ENCODE measurements at regions of chr12 and their contacts with region 1.

Region 1: GRCh38 chr12:4648501-4649357 is at the starts of genes AKAP3 and NDUFA9:
- DNase-seq: peak; percentile 53 to 87 (median 84)
- ATAC-seq: peak; percentile 97
- H3K4me3 ChIP-seq: peak within 1 kb of the TSS; percentile 92
- H3K4me3 Mint-ChIP-seq: peak within 1 kb of the TSS; percentile 88 to 99 (median 97)
- H3K27ac ChIP-seq: peak within 1 kb of the TSS; percentile 80
- H3K27ac Mint-ChIP-seq: peak within 1 kb of the TSS; percentile 90 to 99 (median 95)
- H3K4me1 ChIP-seq: peaks cover 14 to 15% of the 10 kb centered on the region in 2 donors
- H3K4me1 Mint-ChIP-seq: peaks cover 24 to 58% (median 46%) of the 10 kb centered on the region in 7 donors
- H3K27me3 ChIP-seq: no peaks in the 10 kb centered on the region
- H3K27me3 Mint-ChIP-seq: peaks cover 0 to 13% (median 0%) of the 10 kb centered on the region in 5 donors
- total RNA-seq, gene AKAP3: 1.2 to 6.9 (median 2.5) TPM
- total RNA-seq, gene NDUFA9: 55.5 to 103 (median 58.2) TPM

Region 2: DNA sequence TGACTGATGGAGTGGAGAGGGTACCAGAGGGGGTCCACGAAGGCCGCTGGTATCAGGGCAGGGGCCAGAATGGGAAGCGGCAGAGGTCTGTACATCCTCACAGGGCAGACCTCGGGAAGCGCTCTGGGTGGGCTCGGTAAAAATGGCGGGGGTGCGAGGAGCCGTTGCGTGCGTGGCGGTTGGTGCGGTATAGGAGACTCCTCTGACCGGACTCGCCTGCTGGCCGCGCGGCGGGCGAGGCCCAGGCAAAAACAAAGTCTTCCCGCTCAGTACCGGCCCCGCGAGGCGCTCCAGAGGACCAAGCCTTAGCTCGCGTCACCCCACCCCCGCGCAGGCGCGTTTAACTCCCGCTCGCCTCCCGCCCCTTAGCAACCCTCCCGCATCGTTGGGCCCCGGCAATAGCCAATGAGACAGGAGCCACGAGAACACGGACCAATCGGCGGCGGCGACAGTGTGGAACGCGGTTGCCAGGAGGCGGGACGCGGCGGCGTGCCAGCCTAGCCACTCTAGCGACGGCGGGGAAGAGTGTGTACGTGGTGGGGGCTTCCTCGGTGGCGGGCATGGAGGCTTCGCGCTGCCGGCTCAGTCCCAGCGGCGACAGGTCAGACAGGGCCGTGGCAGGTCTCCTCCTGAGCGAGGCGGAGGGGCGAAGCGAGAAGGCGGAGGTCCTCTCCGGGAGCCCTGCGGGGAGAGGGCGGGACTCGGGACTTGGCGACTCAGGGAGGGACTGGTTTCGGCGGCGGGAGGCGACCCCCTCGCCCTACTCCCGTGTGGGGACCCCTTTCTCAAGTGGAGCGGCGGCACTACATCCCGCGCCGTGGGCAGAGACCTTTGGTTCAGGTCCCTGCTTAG is 1758.1 kb before region 1 on chr12 and contains the start of gene TULP3:
- CTCF ChIA-PET with region 1: no interaction called
- POLR2A ChIA-PET with region 1: no interaction called
- intact Hi-C with region 1: loop called in 1 of 2 experiments (anchors 5 kb)
- DNase-seq: peak; percentile 95 to 98 (median 97)
- ATAC-seq: peak; percentile 99
- H3K4me3 ChIP-seq: peak within 1 kb of the TSS; percentile 96
- H3K4me3 Mint-ChIP-seq: peak within 1 kb of the TSS; percentile 93 to 100 (median 98)
- H3K27ac ChIP-seq: peak within 1 kb of the TSS; percentile 89
- H3K27ac Mint-ChIP-seq: peak within 1 kb of the TSS; percentile 81 to 97 (median 97)
- H3K4me1 ChIP-seq: peaks cover 3 to 8% of the 10 kb centered on the region in 2 donors
- H3K4me1 Mint-ChIP-seq: peaks cover 15 to 35% (median 31%) of the 10 kb centered on the region in 7 donors
- H3K27me3 ChIP-seq: no peaks in the 10 kb centered on the region
- H3K27me3 Mint-ChIP-seq: peaks cover 0 to 2% (median 0%) of the 10 kb centered on the region in 5 donors
- total RNA-seq, gene TULP3: 4.7 to 9.6 (median 7.4) TPM

Region 3: GRCh38 chr12:4353785-4354208 is 294.9 kb before region 1 on chr12:
- CTCF ChIA-PET with region 1: no interaction called
- POLR2A ChIA-PET with region 1: no interaction called
- intact Hi-C with region 1: loop called in 1 of 2 experiments (anchors 5 kb)
- DNase-seq: peak in 7 of 9 donors; percentile 32 to 64 (median 53)
- ATAC-seq: peak; percentile 90
- H3K4me3 ChIP-seq: no peak overlapping the region
- H3K4me3 Mint-ChIP-seq: no peak overlapping the region
- H3K27ac ChIP-seq: no peak overlapping the region
- H3K27ac Mint-ChIP-seq: peak overlapping the region in 7 of 9 donors; percentile 14 to 71 (median 51)
- H3K4me1 ChIP-seq: no peaks in the 10 kb centered on the region
- H3K4me1 Mint-ChIP-seq: peaks cover 0 to 9% (median 4%) of the 10 kb centered on the region in 7 donors
- H3K27me3 ChIP-seq: no peaks in the 10 kb centered on the region
- H3K27me3 Mint-ChIP-seq: peaks cover 0 to 2% (median 0%) of the 10 kb centered on the region in 5 donors

Region 4: GRCh38 chr12:4477129-4477528 is 171.6 kb before region 1 on chr12:
- CTCF ChIA-PET with region 1: no interaction called
- POLR2A ChIA-PET with region 1: no interaction called
- intact Hi-C with region 1: no loop called
- DNase-seq: no peak
- ATAC-seq: peak; percentile 32
- H3K4me3 ChIP-seq: no peak overlapping the region
- H3K4me3 Mint-ChIP-seq: no peak overlapping the region
- H3K27ac ChIP-seq: no peak overlapping the region
- H3K27ac Mint-ChIP-seq: no peak overlapping the region
- H3K4me1 ChIP-seq: no peaks in the 10 kb centered on the region
- H3K4me1 Mint-ChIP-seq: no peaks in the 10 kb centered on the region
- H3K27me3 ChIP-seq: no peaks in the 10 kb centered on the region
- H3K27me3 Mint-ChIP-seq: peaks cover 14 to 47% (median 38%) of the 10 kb centered on the region in 5 donors

Region 5: DNA sequence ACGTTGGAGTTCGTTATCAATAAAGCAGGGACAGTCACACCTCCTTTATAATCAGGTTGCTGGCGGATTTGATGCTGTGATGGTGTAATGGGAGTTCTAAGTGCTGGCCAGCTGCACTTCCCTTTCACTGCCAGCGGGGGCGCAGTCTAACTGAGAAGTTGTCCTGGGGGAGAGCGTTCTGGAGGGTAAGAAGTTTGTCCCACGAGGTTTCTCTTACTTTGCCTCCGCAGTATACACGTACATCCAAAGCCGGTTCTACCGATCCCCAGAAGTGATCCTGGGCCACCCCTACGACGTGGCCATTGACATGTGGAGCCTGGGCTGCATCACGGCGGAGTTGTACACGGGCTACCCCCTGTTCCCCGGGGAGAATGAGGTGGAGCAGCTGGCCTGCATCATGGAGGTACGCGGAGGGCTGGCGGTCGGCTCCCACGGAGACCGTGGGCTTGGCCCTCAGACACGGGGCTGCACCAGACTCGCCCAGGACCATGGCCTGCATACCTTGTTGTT is 44.0 kb before region 1 on chr12:
- CTCF ChIA-PET with region 1: interaction called, 4 read pairs
- POLR2A ChIA-PET with region 1: interaction called, 3 read pairs
- intact Hi-C with region 1: loop called (anchors 1 kb)
- DNase-seq: peak; percentile 63 to 82 (median 76)
- ATAC-seq: peak; percentile 99
- H3K4me3 ChIP-seq: peak overlapping the region; percentile 92
- H3K4me3 Mint-ChIP-seq: peak overlapping the region; percentile 83 to 99 (median 98)
- H3K27ac ChIP-seq: peak overlapping the region; percentile 67
- H3K27ac Mint-ChIP-seq: peak overlapping the region; percentile 83 to 97 (median 90)
- H3K4me1 ChIP-seq: peaks cover 7 to 10% of the 10 kb centered on the region in 2 donors
- H3K4me1 Mint-ChIP-seq: peaks cover 16 to 48% (median 35%) of the 10 kb centered on the region in 7 donors
- H3K27me3 ChIP-seq: no peaks in the 10 kb centered on the region
- H3K27me3 Mint-ChIP-seq: peaks cover 0 to 19% (median 7%) of the 10 kb centered on the region in 5 donors

Region 6: GRCh38 chr12:4630262-4630661 is 18.5 kb before region 1 on chr12:
- CTCF ChIA-PET with region 1: no interaction called
- POLR2A ChIA-PET with region 1: no interaction called
- intact Hi-C with region 1: no loop called
- DNase-seq: no peak
- ATAC-seq: no peak
- H3K4me3 ChIP-seq: no peak overlapping the region
- H3K4me3 Mint-ChIP-seq: no peak overlapping the region
- H3K27ac ChIP-seq: no peak overlapping the region
- H3K27ac Mint-ChIP-seq: no peak overlapping the region
- H3K4me1 ChIP-seq: no peaks in the 10 kb centered on the region
- H3K4me1 Mint-ChIP-seq: no peaks in the 10 kb centered on the region
- H3K27me3 ChIP-seq: no peaks in the 10 kb centered on the region
- H3K27me3 Mint-ChIP-seq: peaks cover 0 to 19% (median 0%) of the 10 kb centered on the region in 5 donors

Region 7: DNA sequence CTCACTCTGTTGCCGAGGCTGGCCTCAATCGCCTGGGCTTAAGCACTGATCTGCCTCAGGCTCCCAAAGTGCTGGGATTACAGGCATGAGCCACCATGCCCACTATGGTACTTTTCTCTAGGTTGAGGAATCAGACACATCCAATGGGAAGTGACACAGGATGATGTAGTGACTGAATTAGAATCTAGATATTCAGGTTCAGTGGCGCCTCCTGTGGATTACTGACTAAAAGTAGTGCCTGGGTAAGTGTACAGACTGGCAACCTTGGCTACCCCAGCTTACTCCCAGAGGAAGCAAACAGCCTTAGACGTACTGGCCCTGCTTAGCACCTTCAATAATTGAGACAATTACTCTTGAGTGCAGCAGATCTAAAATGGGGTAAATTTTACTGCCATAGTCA is 94.3 kb after region 1 on chr12:
- CTCF ChIA-PET with region 1: no interaction called
- POLR2A ChIA-PET with region 1: no interaction called
- intact Hi-C with region 1: no loop called
- DNase-seq: no peak
- ATAC-seq: no peak
- H3K4me3 ChIP-seq: no peak overlapping the region
- H3K4me3 Mint-ChIP-seq: no peak overlapping the region
- H3K27ac ChIP-seq: no peak overlapping the region
- H3K27ac Mint-ChIP-seq: no peak overlapping the region
- H3K4me1 ChIP-seq: no peaks in the 10 kb centered on the region
- H3K4me1 Mint-ChIP-seq: no peaks in the 10 kb centered on the region
- H3K27me3 ChIP-seq: no peaks in the 10 kb centered on the region
- H3K27me3 Mint-ChIP-seq: peaks cover 10 to 19% (median 15%) of the 10 kb centered on the region in 5 donors

Region 8: GRCh38 chr12:4829161-4829792 is 180.5 kb after region 1 on chr12:
- CTCF ChIA-PET with region 1: no interaction called
- POLR2A ChIA-PET with region 1: no interaction called
- intact Hi-C with region 1: loop called in 1 of 2 experiments (anchors 5 kb)
- DNase-seq: peak in 7 of 9 donors; percentile 8 to 59 (median 47)
- ATAC-seq: peak; percentile 86
- H3K4me3 ChIP-seq: peak overlapping the region; percentile 39
- H3K4me3 Mint-ChIP-seq: peak overlapping the region; percentile 16 to 89 (median 69)
- H3K27ac ChIP-seq: no peak overlapping the region
- H3K27ac Mint-ChIP-seq: peak overlapping the region; percentile 20 to 99 (median 70)
- H3K4me1 ChIP-seq: peaks cover 37 to 53% of the 10 kb centered on the region in 2 donors
- H3K4me1 Mint-ChIP-seq: peaks cover 44 to 74% (median 65%) of the 10 kb centered on the region in 7 donors
- H3K27me3 ChIP-seq: no peaks in the 10 kb centered on the region
- H3K27me3 Mint-ChIP-seq: no peaks in the 10 kb centered on the region

Region 9: DNA sequence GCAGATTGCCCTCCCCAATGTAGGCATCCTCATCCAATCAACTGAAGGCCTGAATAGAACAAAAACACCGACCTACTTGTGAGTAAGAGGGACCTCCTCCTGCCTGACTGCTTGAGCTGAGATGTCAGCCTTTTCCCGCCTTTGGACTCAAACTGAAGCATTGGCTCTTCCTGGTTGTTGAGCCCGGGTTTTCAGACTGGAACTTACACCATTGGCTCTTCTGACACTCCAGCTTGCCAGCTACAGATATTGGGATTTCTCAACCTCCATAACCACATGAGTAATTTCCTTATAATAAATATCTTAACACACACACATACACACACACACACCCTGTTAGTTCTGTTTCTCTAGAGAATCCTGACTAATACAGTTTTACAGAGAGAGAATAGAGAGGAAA is 609.8 kb after region 1 on chr12:
- CTCF ChIA-PET with region 1: no interaction called
- POLR2A ChIA-PET with region 1: no interaction called
- intact Hi-C with region 1: no loop called
- DNase-seq: no peak
- ATAC-seq: no peak
- H3K4me3 ChIP-seq: no peak overlapping the region
- H3K4me3 Mint-ChIP-seq: no peak overlapping the region
- H3K27ac ChIP-seq: no peak overlapping the region
- H3K27ac Mint-ChIP-seq: no peak overlapping the region
- H3K4me1 ChIP-seq: no peaks in the 10 kb centered on the region
- H3K4me1 Mint-ChIP-seq: no peaks in the 10 kb centered on the region
- H3K27me3 ChIP-seq: no peaks in the 10 kb centered on the region
- H3K27me3 Mint-ChIP-seq: peaks cover 0 to 17% (median 5%) of the 10 kb centered on the region in 5 donors